Transverse colon (tissue), 4 donors: ENCODE measurements at regions of chr9 and their contacts with region 1.

Region 1: GRCh38 chr9:136098844-136099243 is 3.8 kb upstream of the NACC2 start:
- DNase-seq: no peak
- H3K4me3 ChIP-seq: no peak overlapping the region
- H3K27ac ChIP-seq: no peak overlapping the region
- H3K4me1 ChIP-seq: peaks cover 9 to 32% (median 19%) of the 10 kb centered on the region in 4 donors
- H3K27me3 ChIP-seq: peaks cover 18% of the 10 kb centered on the region
- CTCF ChIP-seq: no peak
- EP300 ChIP-seq: no peak
- POLR2A ChIP-seq: no peak

Region 2: DNA sequence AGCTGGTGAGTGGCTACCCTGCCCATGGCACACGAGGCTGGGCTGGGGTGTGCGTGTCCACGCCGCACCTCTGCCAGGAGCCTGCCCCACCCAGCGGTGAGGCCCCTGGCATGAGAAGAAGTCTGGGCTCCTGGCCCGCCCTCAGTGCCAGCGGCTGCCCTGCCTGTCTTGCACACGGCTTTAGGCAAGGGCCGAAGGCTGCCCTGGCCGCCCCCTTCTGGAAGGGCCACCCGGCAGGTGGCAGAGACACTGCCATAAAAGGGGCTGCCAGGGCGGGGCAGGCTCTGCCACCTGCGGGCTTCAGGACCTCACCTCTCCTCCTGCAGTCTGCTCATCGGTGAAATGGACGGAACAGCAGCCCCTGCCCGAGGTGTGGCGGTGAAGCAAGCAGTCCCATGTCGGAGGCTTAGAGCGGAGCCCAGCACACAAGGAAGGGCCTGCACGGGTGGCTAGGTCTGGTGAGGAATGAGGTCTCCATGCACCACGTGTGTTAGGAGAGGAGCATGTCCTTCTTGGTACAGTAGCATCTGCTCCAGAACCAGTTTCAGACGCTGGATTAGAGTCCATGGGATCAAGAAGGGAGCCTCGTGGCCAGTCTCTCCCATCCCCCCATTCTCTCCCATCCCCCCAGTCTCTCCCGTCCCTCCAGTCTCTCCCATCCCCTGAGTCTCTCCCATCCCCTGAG is 54.7 kb after region 1 on chr9:
- in situ Hi-C with region 1: no loop called
- intact Hi-C with region 1: loop called (anchors 2 kb)
- DNase-seq: no peak
- H3K4me3 ChIP-seq: no peak overlapping the region
- H3K27ac ChIP-seq: no peak overlapping the region
- H3K4me1 ChIP-seq: no peaks in the 10 kb centered on the region
- H3K27me3 ChIP-seq: peaks cover 42% of the 10 kb centered on the region
- CTCF ChIP-seq: no peak
- EP300 ChIP-seq: no peak
- POLR2A ChIP-seq: no peak